ENCODE measurements at regions of chr9 and their contacts with region 1.

Region 1: DNA sequence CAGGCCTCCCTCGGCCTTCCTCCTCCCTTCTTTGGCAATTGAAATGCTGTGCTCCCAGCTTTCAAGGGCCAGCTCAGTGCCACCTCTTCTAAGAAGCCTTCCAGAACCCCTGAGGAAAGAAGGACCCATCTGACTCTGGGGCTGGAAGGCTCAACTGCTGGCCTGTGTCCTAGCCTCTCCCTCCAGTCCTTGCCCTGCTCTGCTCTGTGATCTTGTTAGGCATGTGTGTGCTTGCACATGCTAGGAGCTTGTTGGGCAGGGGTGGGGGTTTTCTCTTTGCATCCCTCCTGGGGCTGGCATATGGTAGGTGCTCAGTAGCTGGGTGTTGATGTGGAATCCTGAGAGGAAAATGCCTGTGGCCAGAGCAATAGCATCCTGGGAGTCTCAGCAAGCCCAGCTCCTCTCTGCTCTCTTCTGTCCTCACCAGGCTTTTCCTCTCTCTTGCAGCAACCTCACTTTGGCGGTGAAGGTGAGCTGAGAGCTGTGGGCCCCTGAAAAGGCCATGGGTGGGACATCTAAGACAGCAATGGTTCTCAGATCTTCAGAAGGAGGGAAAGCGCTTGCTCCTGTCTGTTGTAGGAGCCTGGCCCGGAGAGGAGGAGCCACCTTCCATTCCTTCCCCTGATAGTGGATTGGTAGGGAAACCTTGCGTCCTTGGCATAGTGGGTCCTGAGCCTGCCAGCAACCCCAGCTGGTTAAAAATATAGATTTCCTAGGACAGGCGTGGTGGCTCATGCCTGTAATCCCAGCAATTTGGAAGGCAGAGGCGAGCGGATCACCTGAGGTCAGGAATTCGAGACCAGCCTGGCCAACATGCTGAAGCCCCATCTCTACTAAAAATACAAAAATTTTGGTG is 9.9 kb downstream of the DOLK start:
- DNase-seq: no peak
- H3K4me3 ChIP-seq: no peak overlapping the region
- H3K27ac ChIP-seq: no peak overlapping the region
- H3K4me1 ChIP-seq: peaks cover 0 to 8% (median 1%) of the 10 kb centered on the region in 4 experiments
- H3K27me3 ChIP-seq: no peaks in the 10 kb centered on the region

Region 2: DNA sequence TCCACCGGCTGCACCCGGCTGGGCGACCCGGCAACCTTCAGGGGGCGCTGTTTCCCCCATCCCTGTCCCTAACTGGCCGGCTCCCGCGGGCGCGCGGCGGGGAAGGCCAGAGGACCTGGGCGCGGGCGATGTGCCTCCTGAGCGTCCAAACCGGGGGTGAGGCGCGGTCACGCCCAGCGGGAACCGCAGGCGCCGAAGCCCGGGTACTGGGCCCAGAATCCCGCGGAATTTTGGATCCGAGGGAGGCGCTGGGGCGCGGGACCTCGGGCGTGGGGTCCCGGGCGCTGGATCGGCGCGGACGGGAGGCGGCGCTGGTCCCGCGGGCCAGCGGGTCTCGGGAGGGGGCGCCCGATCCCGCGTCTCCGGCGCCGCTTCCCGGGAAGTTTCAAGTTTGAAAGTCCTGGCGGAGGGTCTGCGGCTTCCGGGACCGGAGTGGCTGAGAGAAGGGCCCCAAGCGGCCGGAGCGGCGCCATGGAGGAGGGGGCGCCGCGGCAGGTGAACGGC is 235.0 kb before region 1 on chr9 and contains the start of gene PKN3:
- CTCF ChIA-PET with region 1: no interaction called
- POLR2A ChIA-PET with region 1: no interaction called
- DNase-seq: peak; percentile 80 to 90 (median 90)
- H3K4me3 ChIP-seq: peak within 1 kb of the TSS; percentile 65 to 94 (median 81)
- H3K27ac ChIP-seq: peak within 1 kb of the TSS in 1 of 2 experiments; percentile 58
- H3K4me1 ChIP-seq: peaks cover 0 to 18% (median 11%) of the 10 kb centered on the region in 4 experiments
- H3K27me3 ChIP-seq: no peaks in the 10 kb centered on the region

Region 3: GRCh38 chr9:128921881-128922763 is 15.4 kb before region 1 on chr9:
- CTCF ChIA-PET with region 1: interaction called, 20 read pairs
- POLR2A ChIA-PET with region 1: interaction called, 3 read pairs
- DNase-seq: peak; percentile 36 to 80 (median 77)
- H3K4me3 ChIP-seq: peak overlapping the region in 6 of 7 experiments; percentile 28 to 81 (median 63)
- H3K27ac ChIP-seq: no peak overlapping the region
- H3K4me1 ChIP-seq: peaks cover 0 to 9% (median 1%) of the 10 kb centered on the region in 4 experiments
- H3K27me3 ChIP-seq: no peaks in the 10 kb centered on the region

Region 4: GRCh38 chr9:128947422-128948301 is 10.1 kb after region 1 on chr9 and contains the starts of genes DOLK and NUP188:
- CTCF ChIA-PET with region 1: no interaction called
- POLR2A ChIA-PET with region 1: no interaction called
- DNase-seq: peak; percentile 89 to 95 (median 94)
- H3K4me3 ChIP-seq: peak within 1 kb of the TSS; percentile 73 to 97 (median 93)
- H3K27ac ChIP-seq: peak within 1 kb of the TSS; percentile 75 to 88
- H3K4me1 ChIP-seq: peaks cover 0 to 34% (median 18%) of the 10 kb centered on the region in 4 experiments
- H3K27me3 ChIP-seq: no peaks in the 10 kb centered on the region

Measured in common myeloid progenitor, CD34-positive (primary cell).